CD4-positive, alpha-beta T cell (primary cell): ENCODE measurements at regions of chr12 and their contacts with region 1.

Region 1: DNA sequence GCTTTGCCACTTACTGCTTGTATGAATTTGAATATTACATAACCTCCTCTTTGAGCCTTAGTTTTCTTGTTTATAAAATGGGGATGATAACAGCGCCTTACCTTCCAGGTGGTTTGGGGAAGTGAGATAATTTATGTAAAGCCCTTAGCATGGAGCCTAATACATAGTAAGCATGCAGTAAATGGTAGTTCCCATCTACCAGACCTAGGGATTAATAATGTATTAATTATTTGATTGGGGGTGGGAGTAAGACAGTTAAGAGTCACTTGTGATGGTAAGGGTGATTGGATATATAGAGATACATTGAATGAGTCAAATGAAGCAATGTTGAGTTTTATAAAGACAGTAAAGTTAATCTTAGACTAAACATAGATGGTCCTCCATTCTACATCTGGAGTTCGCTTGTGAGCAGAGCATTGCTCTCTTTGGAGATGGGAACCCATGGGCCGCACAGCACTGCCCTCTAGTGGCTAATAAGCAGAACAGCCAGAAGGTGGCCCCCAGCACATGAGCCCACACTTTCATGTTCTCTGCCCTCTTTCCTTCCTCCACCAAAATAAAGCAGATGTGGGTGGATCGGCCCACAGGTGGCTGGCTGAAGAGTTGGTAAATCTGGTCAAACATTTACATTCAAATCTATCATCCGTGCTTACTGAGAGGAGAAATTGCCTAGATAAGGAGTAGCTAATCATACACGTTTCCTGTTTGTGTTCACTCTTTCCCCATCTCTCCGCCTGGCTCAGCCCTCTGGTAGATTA is 26.5 kb upstream of the TAMALIN start:
- DNase-seq: peak; percentile 41 to 88 (median 58)
- ATAC-seq: peak; percentile 100
- H3K4me3 ChIP-seq: no peak overlapping the region
- H3K4me3 Mint-ChIP-seq: no peak overlapping the region
- H3K27ac ChIP-seq: no peak overlapping the region
- H3K27ac Mint-ChIP-seq: no peak overlapping the region
- H3K4me1 ChIP-seq: peaks cover 19% of the 10 kb centered on the region
- H3K4me1 Mint-ChIP-seq: peaks cover 32% of the 10 kb centered on the region
- H3K27me3 ChIP-seq: no peaks in the 10 kb centered on the region
- H3K27me3 Mint-ChIP-seq: no peaks in the 10 kb centered on the region
- CTCF ChIP-seq: peak; percentile 94

Region 2: GRCh38 chr12:51926718-51927117 is 53.5 kb before region 1 on chr12:
- CTCF ChIA-PET with region 1: no interaction called
- POLR2A ChIA-PET with region 1: no interaction called
- intact Hi-C with region 1: loop called (anchors 1 kb)
- DNase-seq: peak; percentile 22 to 69 (median 41)
- ATAC-seq: peak; percentile 81
- H3K4me3 ChIP-seq: no peak overlapping the region
- H3K4me3 Mint-ChIP-seq: no peak overlapping the region
- H3K27ac ChIP-seq: no peak overlapping the region
- H3K27ac Mint-ChIP-seq: no peak overlapping the region
- H3K4me1 ChIP-seq: peaks cover 12% of the 10 kb centered on the region
- H3K4me1 Mint-ChIP-seq: peaks cover 7% of the 10 kb centered on the region
- H3K27me3 ChIP-seq: no peaks in the 10 kb centered on the region
- H3K27me3 Mint-ChIP-seq: no peaks in the 10 kb centered on the region
- CTCF ChIP-seq: peak; percentile 50